K562 (cell line): ENCODE measurements at regions of chr1 and their contacts with region 1.

Region 1: GRCh38 chr1:53121319-53122172 is 20.9 kb downstream of the SLC1A7 start:
- DNase-seq: no peak
- ATAC-seq: 0 out of 3 replicates have a peak, but pooled peaks have one; percentile 9
- H3K4me3 ChIP-seq: no peak overlapping the region
- H3K27ac ChIP-seq: no peak overlapping the region
- H3K4me1 ChIP-seq: peaks cover 0 to 23% of the 10 kb centered on the region in 2 experiments; a peak in 1 of 5 replicates
- H3K27me3 ChIP-seq: peaks cover 60 to 85% of the 10 kb centered on the region in 2 experiments
- CTCF ChIP-seq: no peak
- EP300 ChIP-seq: no peak
- POLR2A ChIP-seq: no peak
- RAD21 ChIP-seq: no peak

Region 2: DNA sequence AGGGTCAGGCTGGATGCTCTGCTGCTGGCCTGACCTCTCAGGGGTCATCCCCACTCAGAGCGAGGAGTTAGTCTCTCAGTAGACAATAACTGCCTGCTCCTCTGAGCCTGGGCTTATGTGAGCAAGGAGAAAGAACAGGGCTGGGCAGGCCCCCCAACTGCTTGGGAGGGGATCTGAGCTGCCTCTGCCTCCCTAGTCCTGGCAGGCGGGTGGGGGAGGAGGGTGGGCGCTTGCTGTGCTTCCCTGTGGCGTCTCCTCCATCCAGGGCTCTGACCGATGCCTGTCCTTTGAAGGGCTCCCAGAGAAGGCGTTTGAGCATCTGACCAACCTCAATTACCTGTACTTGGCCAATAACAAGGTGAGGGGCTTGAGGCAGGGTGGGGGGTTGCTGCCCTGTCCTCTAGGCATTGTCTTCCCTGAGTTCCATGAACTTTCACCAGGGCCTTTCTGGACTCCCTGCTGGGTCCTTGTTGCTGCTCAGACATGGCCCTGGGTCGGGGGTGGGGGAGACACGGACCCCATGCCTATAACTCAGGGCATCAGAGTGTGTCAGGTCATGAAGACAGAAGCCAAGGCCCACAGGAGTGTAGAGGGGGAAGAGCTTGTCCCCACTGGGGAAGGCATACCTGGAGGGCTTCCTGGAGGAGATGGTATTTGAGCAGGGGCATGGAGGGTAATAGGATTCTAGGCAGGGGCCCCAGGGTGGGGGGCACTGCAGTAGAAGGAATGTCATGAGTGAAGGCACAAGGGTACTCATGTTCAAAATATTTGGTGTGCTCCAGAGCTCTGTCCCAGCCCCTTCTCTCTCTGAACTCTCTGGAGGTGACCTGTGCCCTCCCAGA is 47.0 kb before region 1 on chr1:
- CTCF ChIA-PET with region 1: no interaction called
- POLR2A ChIA-PET with region 1: no interaction called
- in situ Hi-C with region 1: loop called (anchors 5 kb)
- intact Hi-C with region 1: no loop called
- DNase-seq: no peak
- ATAC-seq: no peak
- H3K4me3 ChIP-seq: no peak overlapping the region
- H3K27ac ChIP-seq: no peak overlapping the region
- H3K4me1 ChIP-seq: peaks cover 0 to 34% of the 10 kb centered on the region in 2 experiments; a peak in 1 of 5 replicates
- H3K27me3 ChIP-seq: peaks cover 7 to 30% of the 10 kb centered on the region in 2 experiments; a peak in 3 of 5 replicates
- CTCF ChIP-seq: no peak
- EP300 ChIP-seq: no peak
- POLR2A ChIP-seq: no peak
- RAD21 ChIP-seq: no peak